Transverse colon (tissue), 4 donors: ENCODE measurements at regions of chr16 and their contacts with region 1.

Region 1: DNA sequence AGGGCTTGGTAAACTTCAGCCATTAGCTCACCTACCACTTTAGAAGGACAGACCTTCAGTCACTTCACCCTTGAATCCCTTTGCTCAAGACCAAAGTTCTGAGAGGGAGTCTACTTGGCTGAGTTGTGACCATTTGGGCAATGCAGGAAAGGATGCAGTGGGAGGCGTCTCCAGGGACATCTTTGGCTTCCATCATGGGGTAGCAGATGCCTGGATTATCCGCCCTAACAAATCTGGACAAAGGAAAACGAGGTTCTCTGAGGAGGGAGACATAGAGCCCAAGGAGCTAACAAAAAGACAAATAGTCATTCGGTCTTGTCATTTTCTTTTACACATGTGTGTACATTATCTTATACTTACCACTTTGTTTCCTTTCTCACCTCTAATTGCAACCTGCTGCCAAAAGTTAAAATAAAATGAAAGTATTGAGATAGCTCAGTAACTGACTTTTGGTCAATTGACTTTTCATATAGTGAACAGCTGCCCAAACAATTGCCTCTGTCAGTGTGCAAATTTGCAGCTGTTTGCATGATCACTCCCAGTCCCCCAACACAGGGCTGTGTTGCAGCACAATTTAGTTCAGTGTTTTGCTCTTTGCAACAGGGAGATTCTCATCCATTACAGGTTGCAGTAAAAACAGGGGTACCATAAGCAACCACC is 108.9 kb upstream of the EEF2KMT start:
- DNase-seq: no peak
- H3K4me3 ChIP-seq: no peak overlapping the region
- H3K27ac ChIP-seq: no peak overlapping the region
- H3K4me1 ChIP-seq: peaks cover 0 to 3% (median 0%) of the 10 kb centered on the region in 4 donors
- H3K27me3 ChIP-seq: no peaks in the 10 kb centered on the region
- CTCF ChIP-seq: no peak
- EP300 ChIP-seq: no peak
- POLR2A ChIP-seq: no peak

Region 2: DNA sequence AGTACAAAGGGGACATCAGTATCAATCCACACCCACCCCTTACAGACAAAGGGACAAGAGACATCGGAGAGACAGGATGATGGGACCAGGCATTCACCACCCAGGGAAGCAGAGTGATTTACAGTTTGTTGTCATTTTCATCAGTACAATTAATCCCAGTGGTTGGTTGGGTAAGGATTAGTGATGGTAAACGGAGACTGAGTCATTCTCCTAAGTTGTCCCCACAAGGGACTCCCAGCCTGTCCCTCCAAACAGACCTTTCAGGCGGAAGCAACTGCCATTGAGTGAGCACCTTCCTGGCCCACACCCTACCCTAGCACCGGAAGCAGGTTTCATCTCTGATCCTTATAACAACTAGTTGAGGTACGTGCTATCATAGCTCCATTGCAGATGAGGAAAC is 280.7 kb before region 1 on chr16:
- in situ Hi-C with region 1: no loop called
- intact Hi-C with region 1: no loop called
- DNase-seq: no peak
- H3K4me3 ChIP-seq: no peak overlapping the region
- H3K27ac ChIP-seq: no peak overlapping the region
- H3K4me1 ChIP-seq: peaks cover 0 to 5% (median 0%) of the 10 kb centered on the region in 4 donors
- H3K27me3 ChIP-seq: no peaks in the 10 kb centered on the region
- CTCF ChIP-seq: no peak
- EP300 ChIP-seq: no peak
- POLR2A ChIP-seq: no peak

Region 3: GRCh38 chr16:5932906-5933305 is 726.4 kb after region 1 on chr16:
- in situ Hi-C with region 1: no loop called
- intact Hi-C with region 1: loop called (anchors 5 kb)
- DNase-seq: no peak
- H3K4me3 ChIP-seq: no peak overlapping the region
- H3K27ac ChIP-seq: no peak overlapping the region
- H3K4me1 ChIP-seq: no peaks in the 10 kb centered on the region
- H3K27me3 ChIP-seq: no peaks in the 10 kb centered on the region
- CTCF ChIP-seq: no peak
- EP300 ChIP-seq: no peak
- POLR2A ChIP-seq: no peak